ENCODE measurements at regions of chr4 and their contacts with region 1.

Region 1: GRCh38 chr4:83259586-83259985 is 25.0 kb downstream of the COQ2 start:
- DNase-seq: no peak
- H3K4me3 ChIP-seq: no peak overlapping the region
- H3K27ac ChIP-seq: no peak overlapping the region
- H3K4me1 ChIP-seq: peaks cover 0 to 4% of the 10 kb centered on the region in 2 experiments; a peak in 1 of 4 replicates
- H3K27me3 ChIP-seq: no peaks in the 10 kb centered on the region
- CTCF ChIP-seq: no peak
- EP300 ChIP-seq: no peak
- RAD21 ChIP-seq: no peak

Region 2: GRCh38 chr4:83074086-83074704 is 185.4 kb before region 1 on chr4:
- CTCF ChIA-PET with region 1: interaction called, 24 read pairs
- POLR2A ChIA-PET with region 1: no interaction called
- DNase-seq: peak; percentile 56
- H3K4me3 ChIP-seq: peak overlapping the region in 1 of 2 experiments; percentile 14; a peak in 1 of 4 replicates
- H3K27ac ChIP-seq: peak overlapping the region in 1 of 2 experiments; percentile 83; a peak in 2 of 4 replicates
- H3K4me1 ChIP-seq: peaks cover 0 to 6% of the 10 kb centered on the region in 2 experiments; a peak in 1 of 4 replicates
- H3K27me3 ChIP-seq: no peaks in the 10 kb centered on the region
- CTCF ChIP-seq: peak; percentile 86
- EP300 ChIP-seq: no peak
- RAD21 ChIP-seq: peak; percentile 73

Region 3: GRCh38 chr4:83272900-83273299 is 13.3 kb after region 1 on chr4:
- CTCF ChIA-PET with region 1: interaction called, 10 read pairs
- POLR2A ChIA-PET with region 1: no interaction called
- DNase-seq: no peak
- H3K4me3 ChIP-seq: no peak overlapping the region
- H3K27ac ChIP-seq: no peak overlapping the region
- H3K4me1 ChIP-seq: peaks cover 0 to 3% of the 10 kb centered on the region in 2 experiments; a peak in 1 of 4 replicates
- H3K27me3 ChIP-seq: no peaks in the 10 kb centered on the region
- CTCF ChIP-seq: no peak
- EP300 ChIP-seq: no peak
- RAD21 ChIP-seq: no peak